Upper lobe of right lung (tissue), 1 donor: ENCODE measurements at regions of chr4 and their contacts with region 1.

Region 1: DNA sequence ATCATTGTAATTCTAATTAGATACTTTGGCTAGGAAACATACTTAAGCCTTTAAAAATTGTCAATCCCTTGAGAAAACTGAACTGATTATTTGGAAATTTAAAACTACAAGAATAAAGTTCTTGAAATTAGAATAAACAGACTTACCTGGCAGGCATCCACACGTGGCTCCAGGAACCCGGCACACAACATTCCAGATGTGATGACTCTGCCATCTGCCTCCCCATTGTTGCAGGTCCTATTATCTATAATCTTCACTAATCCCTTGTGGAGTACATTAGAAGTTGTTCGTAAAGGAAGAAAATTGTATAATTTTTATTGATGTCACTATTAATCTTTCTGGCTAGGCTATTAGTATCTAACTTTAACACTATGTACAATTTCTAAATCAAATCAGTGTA is 16.2 kb upstream of the GNRHR start:
- DNase-seq: no peak
- ATAC-seq: no peak
- H3K4me3 ChIP-seq: no peak overlapping the region
- H3K27ac ChIP-seq: no peak overlapping the region
- H3K4me1 ChIP-seq: no peaks in the 10 kb centered on the region
- H3K27me3 ChIP-seq: no peaks in the 10 kb centered on the region
- CTCF ChIP-seq: no peak

Region 2: GRCh38 chr4:67697860-67698687 is 72.3 kb before region 1 on chr4:
- intact Hi-C with region 1: no loop called
- DNase-seq: no peak
- ATAC-seq: no peak
- H3K4me3 ChIP-seq: no peak overlapping the region
- H3K27ac ChIP-seq: no peak overlapping the region
- H3K4me1 ChIP-seq: peaks cover 5% of the 10 kb centered on the region
- H3K27me3 ChIP-seq: no peaks in the 10 kb centered on the region
- CTCF ChIP-seq: no peak

Region 3: DNA sequence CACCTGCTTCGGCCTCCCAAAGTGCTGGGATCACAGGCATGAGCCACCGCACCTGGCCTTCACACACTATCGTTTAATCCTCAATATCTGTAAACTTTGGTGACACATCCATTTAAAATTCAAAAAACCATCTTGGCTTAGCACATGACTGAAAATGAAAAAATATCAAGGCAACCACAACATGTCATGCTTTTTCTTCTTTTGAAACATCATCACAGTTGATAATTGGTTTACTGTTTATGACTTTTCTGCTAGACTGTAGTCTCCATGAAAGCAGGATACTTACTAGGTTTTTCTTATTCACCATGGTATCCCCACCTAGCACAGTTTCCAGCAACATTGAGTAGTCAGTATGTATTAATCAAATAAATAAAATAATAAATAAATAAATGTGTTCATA is 27.2 kb before region 1 on chr4:
- intact Hi-C with region 1: loop called (anchors 2 kb)
- DNase-seq: no peak
- ATAC-seq: no peak
- H3K4me3 ChIP-seq: no peak overlapping the region
- H3K27ac ChIP-seq: no peak overlapping the region
- H3K4me1 ChIP-seq: no peaks in the 10 kb centered on the region
- H3K27me3 ChIP-seq: no peaks in the 10 kb centered on the region
- CTCF ChIP-seq: no peak

Region 4: DNA sequence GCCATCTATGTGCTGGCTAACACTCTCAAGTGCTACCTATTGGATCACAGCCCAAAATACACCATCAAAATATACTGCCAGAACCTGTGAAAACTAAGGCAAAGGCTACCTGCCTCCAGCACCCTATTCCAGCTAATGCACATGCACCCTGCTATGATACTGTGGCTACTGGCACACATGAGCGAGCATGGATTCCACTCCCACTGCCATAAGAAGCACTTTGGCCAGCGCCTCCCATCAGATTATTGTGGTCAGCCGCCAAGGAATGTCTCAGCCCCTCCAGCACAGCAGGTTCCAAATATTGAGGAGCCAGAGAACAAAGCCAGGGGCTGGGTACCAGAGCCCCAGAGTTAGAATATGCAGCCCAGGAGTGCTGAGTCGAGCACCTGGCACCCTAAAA is 391.8 kb after region 1 on chr4:
- intact Hi-C with region 1: no loop called
- DNase-seq: no peak
- ATAC-seq: no peak
- H3K4me3 ChIP-seq: no peak overlapping the region
- H3K27ac ChIP-seq: no peak overlapping the region
- H3K4me1 ChIP-seq: no peaks in the 10 kb centered on the region
- H3K27me3 ChIP-seq: no peaks in the 10 kb centered on the region
- CTCF ChIP-seq: no peak

Region 5: GRCh38 chr4:68724419-68724818 is 954.0 kb after region 1 on chr4:
- intact Hi-C with region 1: no loop called
- DNase-seq: no peak
- ATAC-seq: peak; percentile 26
- H3K4me3 ChIP-seq: no peak overlapping the region
- H3K27ac ChIP-seq: no peak overlapping the region
- H3K4me1 ChIP-seq: no peaks in the 10 kb centered on the region
- H3K27me3 ChIP-seq: no peaks in the 10 kb centered on the region
- CTCF ChIP-seq: no peak